ENCODE measurements at regions of chr9 and their contacts with region 1.

Region 1: GRCh38 chr9:91422758-91423711 is 597 bp downstream of the NFIL3 start:
- DNase-seq: peak; percentile 73 to 94
- H3K4me3 ChIP-seq: peak overlapping the region; percentile 88
- CTCF ChIP-seq: no peak
- POLR2A ChIP-seq: no peak

Region 2: DNA sequence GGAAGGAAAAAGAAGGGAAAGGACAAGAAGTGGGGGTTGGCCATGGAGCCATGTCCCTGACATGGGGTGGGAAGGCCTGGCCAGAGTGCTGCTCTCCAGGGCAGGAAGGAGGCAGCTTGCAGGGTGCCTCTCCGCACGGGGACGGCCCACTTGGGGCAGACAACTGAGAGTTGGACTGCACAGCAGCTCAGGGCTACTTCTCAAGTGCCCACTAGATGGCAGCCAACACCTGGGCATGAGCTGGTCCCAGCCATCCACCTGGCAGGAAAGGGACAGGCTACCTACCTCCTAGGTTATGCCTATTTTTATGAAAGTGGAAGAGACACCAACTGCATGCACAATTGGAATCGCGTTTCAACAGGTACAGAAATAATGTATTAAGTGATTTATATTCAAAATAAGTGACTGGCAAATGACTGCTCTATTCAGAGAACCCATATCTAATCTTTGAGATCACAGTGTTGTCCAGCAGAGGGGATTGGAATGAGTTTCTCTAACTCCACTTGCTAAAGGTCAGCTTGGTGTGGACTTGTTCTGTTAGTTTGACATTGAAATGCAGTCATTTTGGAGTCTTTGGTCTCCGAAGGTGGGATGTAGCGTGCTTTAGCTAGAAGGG is 508.1 kb before region 1 on chr9:
- intact Hi-C with region 1: loop called (anchors 5 kb)
- DNase-seq: peak in 1 of 2 donors; percentile 32
- H3K4me3 ChIP-seq: no peak overlapping the region
- CTCF ChIP-seq: peak in 2 of 3 donors; percentile 51 to 93
- POLR2A ChIP-seq: no peak

Region 3: GRCh38 chr9:90985631-90986030 is 437.4 kb before region 1 on chr9:
- intact Hi-C with region 1: loop called (anchors 10 kb)
- DNase-seq: no peak
- H3K4me3 ChIP-seq: no peak overlapping the region
- CTCF ChIP-seq: no peak
- POLR2A ChIP-seq: no peak

Region 4: GRCh38 chr9:91193658-91194391 is 229.2 kb before region 1 on chr9:
- intact Hi-C with region 1: loop called (anchors 10 kb)
- DNase-seq: peak; percentile 68 to 95
- H3K4me3 ChIP-seq: peak overlapping the region; percentile 20
- CTCF ChIP-seq: no peak
- POLR2A ChIP-seq: no peak

Region 5: DNA sequence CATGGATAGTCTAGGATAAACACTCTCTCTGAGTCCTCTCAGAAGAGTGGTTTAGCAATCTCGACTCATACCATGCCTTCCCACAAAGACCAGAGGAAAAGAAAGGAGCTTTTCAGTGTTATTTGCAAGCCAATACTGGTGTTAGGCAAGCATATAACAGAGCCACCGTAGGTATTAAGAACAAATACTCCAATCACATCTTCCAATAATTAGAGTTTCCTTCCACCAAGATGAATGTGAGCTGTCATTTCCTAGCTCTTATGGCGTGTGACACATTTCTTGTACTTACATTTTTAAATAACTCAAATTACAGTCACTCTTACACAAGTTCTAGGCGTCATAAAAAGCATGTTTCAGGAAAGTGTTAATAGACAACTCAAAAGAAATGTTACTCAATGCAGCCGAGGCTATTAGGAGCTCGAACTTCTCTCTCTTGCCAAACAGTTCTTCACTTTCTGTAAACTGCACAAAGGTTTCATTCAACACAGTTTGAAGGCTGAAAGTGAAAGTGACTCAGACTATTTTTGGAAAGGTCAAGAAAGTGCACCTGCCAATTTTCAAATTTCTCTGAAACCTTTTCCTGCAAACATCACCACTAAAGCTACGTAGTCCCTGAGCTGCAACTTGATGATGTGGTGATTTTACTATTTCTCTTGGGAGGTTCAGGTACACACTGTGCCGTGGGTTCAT is 215.2 kb before region 1 on chr9:
- intact Hi-C with region 1: no loop called
- DNase-seq: no peak
- H3K4me3 ChIP-seq: no peak overlapping the region
- CTCF ChIP-seq: no peak
- POLR2A ChIP-seq: no peak

Region 6: DNA sequence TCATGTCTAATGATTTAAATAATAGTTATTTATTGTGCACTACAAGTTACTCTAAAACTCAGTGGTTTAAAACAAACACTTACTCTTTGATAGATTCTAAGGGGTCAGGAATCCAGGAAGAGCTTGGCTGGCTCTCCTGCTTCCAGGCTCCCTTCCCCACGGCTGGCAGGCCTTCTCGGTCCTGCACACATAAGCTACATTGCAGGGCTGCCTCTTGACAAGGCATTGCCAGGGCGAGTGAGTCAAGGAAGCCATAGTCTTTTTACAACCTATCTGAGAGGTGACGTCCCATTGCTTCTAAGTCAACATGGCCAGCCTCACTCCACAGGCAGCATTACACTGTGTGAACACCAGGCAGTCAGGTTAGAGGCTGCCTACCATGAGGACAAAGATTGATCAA is 181.1 kb before region 1 on chr9:
- intact Hi-C with region 1: no loop called
- DNase-seq: no peak
- H3K4me3 ChIP-seq: no peak overlapping the region
- CTCF ChIP-seq: no peak
- POLR2A ChIP-seq: no peak